PC-9 (cell line): ENCODE measurements at regions of chr20 and their contacts with region 1.

Region 1: GRCh38 chr20:37534401-37535157 is 6.9 kb upstream of the BLCAP start:
- DNase-seq: peak; percentile 64 to 68
- H3K4me3 ChIP-seq: no peak overlapping the region
- H3K27ac ChIP-seq: no peak overlapping the region
- H3K4me1 ChIP-seq: no peaks in the 10 kb centered on the region
- H3K27me3 ChIP-seq: no peaks in the 10 kb centered on the region
- CTCF ChIP-seq: peak; percentile 85

Region 2: GRCh38 chr20:37202267-37202943 is 332.2 kb before region 1 on chr20:
- CTCF ChIA-PET with region 1: no interaction called
- POLR2A ChIA-PET with region 1: no interaction called
- intact Hi-C with region 1: loop called (anchors 1 kb)
- DNase-seq: peak; percentile 57 to 92
- H3K4me3 ChIP-seq: no peak overlapping the region
- H3K27ac ChIP-seq: peak overlapping the region; percentile 40
- H3K4me1 ChIP-seq: peaks cover 9% of the 10 kb centered on the region
- H3K27me3 ChIP-seq: no peaks in the 10 kb centered on the region
- CTCF ChIP-seq: peak; percentile 89

Region 3: DNA sequence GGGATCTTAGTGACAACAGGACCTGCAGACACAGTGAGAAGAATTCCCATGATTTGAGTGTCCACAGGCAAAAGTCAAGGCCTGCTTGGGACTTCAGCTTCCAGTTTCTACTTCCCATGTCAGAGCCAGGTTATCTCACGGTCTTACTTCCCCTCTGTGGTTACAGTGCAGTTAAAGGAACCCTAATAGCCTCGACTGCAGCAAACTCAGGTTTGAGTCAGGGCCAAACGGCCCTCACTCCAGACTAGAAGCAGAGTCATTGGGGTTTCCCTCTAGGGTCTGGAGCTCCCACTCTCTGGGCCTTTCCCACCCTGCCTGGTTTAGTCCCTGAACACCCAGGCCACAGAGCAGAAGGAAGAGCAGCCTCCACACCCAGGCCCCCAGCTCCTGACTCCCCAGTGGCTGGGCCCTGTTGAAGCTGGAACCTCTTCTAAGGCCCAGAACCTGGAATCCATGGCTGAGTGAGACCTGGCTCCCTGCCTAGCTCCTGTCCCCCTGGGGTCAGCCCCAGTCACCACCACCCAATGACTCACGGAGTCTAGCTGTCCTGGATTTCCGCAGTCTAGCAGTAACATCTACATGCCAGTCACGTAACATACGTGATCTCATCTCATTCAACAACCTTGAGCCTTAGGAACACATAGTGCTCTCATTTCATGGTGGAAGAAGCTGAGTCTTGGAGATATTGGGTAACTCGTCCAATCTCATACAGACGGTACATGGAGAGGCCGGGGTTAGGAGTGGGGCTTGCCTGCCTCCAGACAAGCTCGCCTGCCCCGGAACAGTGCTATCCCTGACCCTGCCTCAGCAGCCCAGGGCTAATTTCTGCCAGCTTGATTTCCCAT is 263.8 kb before region 1 on chr20:
- CTCF ChIA-PET with region 1: interaction called, 6 read pairs
- POLR2A ChIA-PET with region 1: no interaction called
- intact Hi-C with region 1: loop called (anchors 1 kb)
- DNase-seq: no peak
- H3K4me3 ChIP-seq: no peak overlapping the region
- H3K27ac ChIP-seq: no peak overlapping the region
- H3K4me1 ChIP-seq: no peaks in the 10 kb centered on the region
- H3K27me3 ChIP-seq: no peaks in the 10 kb centered on the region
- CTCF ChIP-seq: no peak

Region 4: GRCh38 chr20:37552415-37552814 is 17.8 kb after region 1 on chr20:
- CTCF ChIA-PET with region 1: no interaction called
- POLR2A ChIA-PET with region 1: no interaction called
- intact Hi-C with region 1: no loop called
- DNase-seq: no peak
- H3K4me3 ChIP-seq: no peak overlapping the region
- H3K27ac ChIP-seq: no peak overlapping the region
- H3K4me1 ChIP-seq: no peaks in the 10 kb centered on the region
- H3K27me3 ChIP-seq: no peaks in the 10 kb centered on the region
- CTCF ChIP-seq: no peak

Region 5: DNA sequence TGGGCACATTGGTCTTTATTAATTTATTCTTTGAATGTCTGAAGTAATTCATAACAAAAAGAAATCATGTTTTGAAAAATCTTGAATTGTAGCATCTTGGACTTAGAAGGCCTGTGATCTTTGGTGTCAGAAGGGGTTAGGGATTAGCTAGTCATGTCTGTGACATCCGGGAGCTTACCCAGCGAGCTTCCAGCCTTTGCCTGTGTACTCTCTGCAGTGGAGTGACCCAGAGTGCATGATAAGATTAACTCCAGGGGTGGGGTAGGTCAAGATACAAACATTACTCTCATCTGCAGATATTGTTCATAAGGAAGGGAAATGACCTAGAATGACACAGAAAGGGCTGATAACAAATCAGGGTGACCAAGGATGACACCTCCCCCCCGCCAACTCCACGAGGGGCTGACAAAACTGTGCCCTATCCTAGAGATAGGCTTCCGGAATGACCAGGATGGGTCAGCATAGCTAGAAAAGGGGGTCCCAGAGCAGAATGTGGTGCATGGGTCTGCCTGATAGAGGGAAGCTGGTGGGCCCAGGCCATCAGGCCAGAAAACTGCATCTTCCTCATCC is 49.7 kb after region 1 on chr20:
- CTCF ChIA-PET with region 1: no interaction called
- POLR2A ChIA-PET with region 1: interaction called, 10 read pairs
- intact Hi-C with region 1: no loop called
- DNase-seq: no peak
- H3K4me3 ChIP-seq: no peak overlapping the region
- H3K27ac ChIP-seq: no peak overlapping the region
- H3K4me1 ChIP-seq: no peaks in the 10 kb centered on the region
- H3K27me3 ChIP-seq: peaks cover 80% of the 10 kb centered on the region
- CTCF ChIP-seq: no peak

Region 6: GRCh38 chr20:37777012-37777950 is 242.7 kb after region 1 on chr20:
- CTCF ChIA-PET with region 1: no interaction called
- POLR2A ChIA-PET with region 1: no interaction called
- intact Hi-C with region 1: no loop called
- DNase-seq: no peak
- H3K4me3 ChIP-seq: no peak overlapping the region
- H3K27ac ChIP-seq: no peak overlapping the region
- H3K4me1 ChIP-seq: no peaks in the 10 kb centered on the region
- H3K27me3 ChIP-seq: no peaks in the 10 kb centered on the region
- CTCF ChIP-seq: no peak